Naive thymus-derived CD4-positive, alpha-beta T cell (primary cell): ENCODE measurements at regions of chr15 and their contacts with region 1.

Region 1: GRCh38 chr15:31511707-31512310 is 185.2 kb downstream of the KLF13 start:
- DNase-seq: peak in 5 of 9 donors; percentile 14 to 62 (median 51)
- ATAC-seq: peak; percentile 75
- H3K4me3 ChIP-seq: no peak overlapping the region
- H3K4me3 Mint-ChIP-seq: peak overlapping the region in 2 of 10 donors; percentile 33 to 67
- H3K27ac ChIP-seq: no peak overlapping the region
- H3K27ac Mint-ChIP-seq: peak overlapping the region in 4 of 9 donors; percentile 19 to 77 (median 31)
- H3K4me1 ChIP-seq: peaks cover 6 to 10% of the 10 kb centered on the region in 2 donors
- H3K4me1 Mint-ChIP-seq: peaks cover 9 to 36% (median 18%) of the 10 kb centered on the region in 7 donors
- H3K27me3 ChIP-seq: no peaks in the 10 kb centered on the region
- H3K27me3 Mint-ChIP-seq: peaks cover 0 to 11% (median 5%) of the 10 kb centered on the region in 5 donors

Region 2: DNA sequence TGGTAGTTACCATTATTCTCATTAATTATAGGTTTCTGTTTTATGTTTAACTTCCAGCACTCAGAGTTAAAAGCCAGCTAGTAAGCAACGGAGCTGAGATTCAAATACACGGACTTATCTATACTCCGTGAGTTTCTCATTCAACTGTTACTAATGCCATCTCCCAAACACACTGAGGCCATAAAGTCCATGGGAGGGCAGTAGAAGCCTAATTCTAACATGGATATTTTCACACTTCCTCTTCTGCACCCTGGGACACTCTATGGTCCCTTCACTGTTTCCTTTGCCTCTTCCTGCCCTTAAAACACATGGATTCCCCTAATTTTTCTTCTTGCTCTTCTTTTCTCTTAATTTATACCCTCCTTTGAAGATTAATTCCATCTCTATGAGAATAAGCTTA is 59.9 kb after region 1 on chr15:
- CTCF ChIA-PET with region 1: no interaction called
- POLR2A ChIA-PET with region 1: no interaction called
- intact Hi-C with region 1: loop called in 1 of 2 experiments (anchors 10 kb)
- DNase-seq: no peak
- ATAC-seq: no peak
- H3K4me3 ChIP-seq: no peak overlapping the region
- H3K4me3 Mint-ChIP-seq: no peak overlapping the region
- H3K27ac ChIP-seq: no peak overlapping the region
- H3K27ac Mint-ChIP-seq: no peak overlapping the region
- H3K4me1 ChIP-seq: no peaks in the 10 kb centered on the region
- H3K4me1 Mint-ChIP-seq: peaks cover 0 to 4% (median 0%) of the 10 kb centered on the region in 7 donors
- H3K27me3 ChIP-seq: no peaks in the 10 kb centered on the region
- H3K27me3 Mint-ChIP-seq: peaks cover 0 to 24% (median 11%) of the 10 kb centered on the region in 5 donors